Right ventricle myocardium superior (tissue), 1 donor: ENCODE measurements at regions of chr3 and their contacts with region 1.

Region 1: DNA sequence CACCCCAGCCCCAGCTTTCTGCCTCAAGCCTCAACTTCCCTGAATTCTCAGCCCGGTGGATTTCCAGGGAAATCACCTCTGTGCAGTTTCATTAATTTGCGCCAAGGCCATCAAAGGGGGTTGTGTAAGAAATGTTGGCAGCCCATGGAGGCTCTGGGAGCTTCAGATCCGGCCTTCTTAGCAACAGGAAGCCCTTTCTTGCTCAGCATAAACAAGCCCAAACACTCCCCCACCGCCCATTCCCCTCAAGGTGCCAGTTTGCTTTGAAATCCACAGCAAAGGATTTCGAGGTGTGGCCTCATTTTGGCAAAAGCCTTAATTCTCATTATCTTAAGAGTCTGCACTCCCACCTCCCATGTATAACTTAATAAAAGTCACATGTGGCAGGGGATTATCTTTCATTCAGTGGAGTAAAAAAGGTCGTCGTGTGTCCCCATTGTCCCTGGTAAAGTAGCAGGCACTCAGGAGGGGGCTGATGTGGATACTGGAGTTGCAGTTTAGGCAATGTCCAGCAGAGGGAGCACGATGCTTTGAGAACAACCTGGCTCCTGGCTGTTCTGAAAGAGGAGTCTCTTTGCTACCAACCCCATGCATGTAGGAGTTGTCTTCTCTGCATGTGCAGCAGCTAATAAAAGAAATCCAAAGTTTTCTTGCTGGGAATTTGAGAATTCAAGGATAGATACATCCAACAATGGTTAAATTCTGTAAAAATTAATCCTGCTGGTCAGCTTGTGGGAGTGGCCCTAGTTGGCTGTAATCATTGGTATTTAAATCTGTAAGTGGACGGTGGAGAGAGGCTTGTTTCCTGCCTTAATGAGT is 39.5 kb downstream of the EBLN2 start:
- DNase-seq: peak; percentile 79
- ATAC-seq: peak; percentile 91

Region 2: GRCh38 chr3:73164622-73165021 is 63.7 kb after region 1 on chr3:
- intact Hi-C with region 1: no loop called
- DNase-seq: no peak
- ATAC-seq: no peak

Region 3: GRCh38 chr3:73432023-73432705 is 331.2 kb after region 1 on chr3:
- intact Hi-C with region 1: loop called (anchors 10 kb)
- DNase-seq: no peak
- ATAC-seq: peak; percentile 42

Region 4: DNA sequence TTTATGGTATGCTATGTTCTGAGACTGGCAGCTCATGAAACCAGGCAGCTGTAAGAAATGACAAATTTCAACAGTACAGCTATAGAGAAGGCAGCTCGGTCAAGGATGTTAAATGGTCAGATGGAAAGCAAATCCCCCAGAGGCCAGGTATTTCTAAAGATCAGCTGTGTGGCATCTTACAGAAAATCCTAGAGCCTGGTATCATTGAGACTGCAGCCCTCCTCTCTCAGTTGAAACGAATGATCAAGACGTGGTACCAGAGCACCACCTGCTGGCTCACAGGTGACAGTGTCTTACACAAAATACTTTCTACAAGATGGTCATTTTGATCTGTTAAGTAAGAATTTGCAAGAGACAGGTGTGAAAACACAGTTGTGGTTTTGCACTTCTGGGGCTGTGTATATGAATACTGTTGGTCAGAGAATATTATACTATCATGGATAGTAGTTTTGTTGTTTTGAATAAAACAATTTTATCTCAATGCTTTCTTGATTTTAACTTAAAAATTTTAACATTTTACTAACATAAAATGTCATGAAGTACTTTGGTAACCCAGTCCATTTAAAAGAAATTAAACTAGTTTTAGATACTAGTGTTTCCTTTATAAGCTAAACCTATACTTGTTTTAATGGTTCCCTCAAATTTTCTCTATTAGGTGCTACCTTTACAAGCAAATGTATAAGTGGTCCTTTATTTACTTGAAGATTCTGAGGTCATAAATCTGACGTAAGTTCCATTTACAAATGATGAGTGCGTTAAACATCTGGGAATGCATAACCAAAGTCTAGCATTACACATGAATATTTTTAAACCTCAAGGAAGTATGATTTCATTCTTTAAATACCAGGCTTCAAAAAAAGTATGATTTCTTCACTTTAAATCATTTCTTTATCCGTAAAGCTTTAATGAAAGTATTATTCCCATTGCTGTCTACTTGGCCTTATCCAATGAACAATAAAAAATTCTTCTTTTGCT is 401.9 kb after region 1 on chr3:
- intact Hi-C with region 1: loop called (anchors 5 kb)
- DNase-seq: peak; percentile 54
- ATAC-seq: peak; percentile 66